Dorsolateral prefrontal cortex (tissue), 120 donors: ENCODE measurements at regions of chr1 and their contacts with region 1.

Region 1: GRCh38 chr1:110106013-110106941 is 6.0 kb upstream of the UBL4B start:
- DNase-seq: peak; percentile 50 to 80 (median 66)
- H3K4me3 ChIP-seq: no peak overlapping the region
- H3K27ac ChIP-seq: no peak overlapping the region
- H3K27me3 ChIP-seq: no peaks in the 10 kb centered on the region
- CTCF ChIP-seq: peak; percentile 49 to 93 (median 84)

Region 2: GRCh38 chr1:110034451-110035235 is 71.6 kb before region 1 on chr1 and contains the start of gene STRIP1:
- intact Hi-C with region 1: loop called in 1 of 2 experiments (anchors 5 kb)
- DNase-seq: peak; percentile 76 to 92 (median 88)
- H3K4me3 ChIP-seq: peak within 1 kb of the TSS; percentile 73 to 100 (median 95)
- H3K27ac ChIP-seq: peak within 1 kb of the TSS; percentile 36 to 97 (median 88)
- H3K27me3 ChIP-seq: no peaks in the 10 kb centered on the region
- CTCF ChIP-seq: peak in 43 of 56 donors; percentile 4 to 64 (median 29)
- total RNA-seq, gene STRIP1: 45.9 to 78.9 (median 61.2) TPM